ENCODE measurements at regions of chr20 and their contacts with region 1.

Region 1: DNA sequence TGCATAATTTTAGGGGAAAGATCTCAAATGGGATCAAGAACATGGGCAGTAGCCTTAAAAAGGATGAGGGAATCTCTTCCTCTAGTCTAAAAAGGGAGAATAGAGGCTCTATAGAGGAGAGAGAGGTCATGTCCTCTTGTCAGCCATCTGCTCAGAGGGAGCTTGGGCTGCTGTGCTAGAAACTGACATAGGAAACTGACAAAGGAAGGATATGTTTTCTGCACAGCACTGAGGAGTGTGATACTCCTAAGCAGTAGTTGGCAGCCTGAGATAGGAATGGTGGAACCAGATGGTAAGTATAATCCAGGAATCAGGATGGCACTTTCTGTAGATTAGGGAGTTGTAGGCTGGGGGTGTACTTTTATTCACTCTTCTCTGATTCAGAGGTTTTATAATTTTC is 59.2 kb downstream of the PTPRA start:
- DNase-seq: no peak
- H3K4me3 ChIP-seq: no peak overlapping the region
- H3K27ac ChIP-seq: no peak overlapping the region
- H3K4me1 ChIP-seq: no peaks in the 10 kb centered on the region
- H3K27me3 ChIP-seq: no peaks in the 10 kb centered on the region
- CTCF ChIP-seq: no peak

Region 2: GRCh38 chr20:2700913-2701620 is 231.4 kb before region 1 on chr20:
- CTCF ChIA-PET with region 1: no interaction called
- POLR2A ChIA-PET with region 1: no interaction called
- intact Hi-C with region 1: no loop called
- DNase-seq: no peak
- H3K4me3 ChIP-seq: no peak overlapping the region
- H3K27ac ChIP-seq: no peak overlapping the region
- H3K4me1 ChIP-seq: no peaks in the 10 kb centered on the region
- H3K27me3 ChIP-seq: peaks cover 89% of the 10 kb centered on the region
- CTCF ChIP-seq: no peak

Region 3: DNA sequence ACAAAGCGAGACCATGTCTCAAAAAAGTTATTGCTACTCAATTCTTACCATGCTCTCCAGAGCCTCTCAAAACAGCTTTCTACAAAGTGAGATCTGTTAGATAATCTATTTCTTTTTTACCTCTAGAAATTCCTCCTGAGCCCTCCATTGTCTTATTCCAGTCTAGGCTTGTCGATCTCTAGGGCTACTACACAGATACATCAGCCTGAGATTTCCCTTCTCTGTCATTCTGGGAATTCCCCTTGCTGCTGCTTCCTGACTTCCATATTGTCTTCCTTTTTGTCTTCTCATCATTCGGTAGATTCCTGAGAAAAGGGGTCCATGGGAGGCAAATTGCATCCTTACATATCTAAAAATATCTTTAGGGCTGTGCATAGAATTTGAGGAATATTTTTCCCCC is 35.3 kb after region 1 on chr20:
- CTCF ChIA-PET with region 1: no interaction called
- POLR2A ChIA-PET with region 1: interaction called, 16 read pairs
- intact Hi-C with region 1: no loop called
- DNase-seq: no peak
- H3K4me3 ChIP-seq: no peak overlapping the region
- H3K27ac ChIP-seq: no peak overlapping the region
- H3K4me1 ChIP-seq: no peaks in the 10 kb centered on the region
- H3K27me3 ChIP-seq: no peaks in the 10 kb centered on the region
- CTCF ChIP-seq: no peak

Measured in PC-9 (cell line).